Heart left ventricle (tissue), 16 donors: ENCODE measurements at regions of chr16 and their contacts with region 1.

Region 1: GRCh38 chr16:75471723-75472633 is 7.5 kb upstream of the TMEM170A start:
- DNase-seq: peak in 4 of 5 donors; percentile 46 to 56 (median 52)
- ATAC-seq: peak; percentile 87 to 98 (median 94)
- H3K4me3 ChIP-seq: no peak overlapping the region
- H3K27ac ChIP-seq: no peak overlapping the region
- H3K4me1 ChIP-seq: no peaks in the 10 kb centered on the region
- H3K27me3 ChIP-seq: no peaks in the 10 kb centered on the region
- CTCF ChIP-seq: peak; percentile 57 to 84 (median 74)
- POLR2A ChIP-seq: no peak

Region 2: GRCh38 chr16:75506567-75506966 is 34.6 kb after region 1 on chr16:
- intact Hi-C with region 1: no loop called
- DNase-seq: peak in 2 of 5 donors; percentile 58 to 66
- ATAC-seq: peak; percentile 36 to 83 (median 75)
- H3K4me3 ChIP-seq: no peak overlapping the region
- H3K27ac ChIP-seq: peak overlapping the region in 6 of 12 donors; percentile 14 to 67 (median 25)
- H3K4me1 ChIP-seq: peaks cover 0 to 12% (median under 1%) of the 10 kb centered on the region in 12 donors
- H3K27me3 ChIP-seq: no peaks in the 10 kb centered on the region
- CTCF ChIP-seq: no peak
- POLR2A ChIP-seq: no peak

Region 3: GRCh38 chr16:75527825-75528299 is 55.9 kb after region 1 on chr16:
- intact Hi-C with region 1: loop called in 1 of 10 experiments (anchors 5 kb)
- DNase-seq: no peak
- ATAC-seq: no peak
- H3K4me3 ChIP-seq: no peak overlapping the region
- H3K27ac ChIP-seq: no peak overlapping the region
- H3K4me1 ChIP-seq: no peaks in the 10 kb centered on the region
- H3K27me3 ChIP-seq: no peaks in the 10 kb centered on the region
- CTCF ChIP-seq: no peak
- POLR2A ChIP-seq: no peak

Region 4: DNA sequence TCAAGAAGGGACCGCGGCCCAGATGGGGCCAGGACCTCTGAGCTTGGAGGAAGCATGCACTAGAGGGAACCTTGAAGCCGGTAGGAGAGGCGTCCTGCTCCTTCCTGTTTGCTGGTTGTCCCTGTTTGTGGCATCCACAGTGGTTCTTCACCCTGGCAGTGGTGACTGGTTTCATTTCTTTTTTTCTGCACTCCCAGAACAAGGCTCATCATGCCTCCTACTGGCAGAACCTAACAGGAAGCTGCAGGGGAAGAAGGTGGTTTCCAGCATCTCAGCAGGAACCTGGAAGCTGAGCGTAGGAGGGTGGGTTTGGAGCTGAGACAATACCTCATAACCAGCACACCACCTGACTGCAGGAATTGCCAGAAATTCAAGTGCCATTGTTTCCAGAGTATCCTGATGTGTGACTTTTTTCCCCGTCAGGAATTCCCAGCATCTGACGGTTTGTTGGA is 78.3 kb after region 1 on chr16:
- intact Hi-C with region 1: loop called in 4 of 10 experiments (anchors 5 to 10 kb)
- DNase-seq: peak in 4 of 5 donors; percentile 51 to 76 (median 73)
- ATAC-seq: peak; percentile 54 to 89 (median 64)
- H3K4me3 ChIP-seq: peak overlapping the region in 5 of 12 donors; percentile 5 to 32 (median 23)
- H3K27ac ChIP-seq: peak overlapping the region in 10 of 12 donors; percentile 50 to 81 (median 70)
- H3K4me1 ChIP-seq: peaks cover 0 to 35% (median 9%) of the 10 kb centered on the region in 12 donors
- H3K27me3 ChIP-seq: no peaks in the 10 kb centered on the region
- CTCF ChIP-seq: peak; percentile 14 to 68 (median 48)
- POLR2A ChIP-seq: no peak

Region 5: DNA sequence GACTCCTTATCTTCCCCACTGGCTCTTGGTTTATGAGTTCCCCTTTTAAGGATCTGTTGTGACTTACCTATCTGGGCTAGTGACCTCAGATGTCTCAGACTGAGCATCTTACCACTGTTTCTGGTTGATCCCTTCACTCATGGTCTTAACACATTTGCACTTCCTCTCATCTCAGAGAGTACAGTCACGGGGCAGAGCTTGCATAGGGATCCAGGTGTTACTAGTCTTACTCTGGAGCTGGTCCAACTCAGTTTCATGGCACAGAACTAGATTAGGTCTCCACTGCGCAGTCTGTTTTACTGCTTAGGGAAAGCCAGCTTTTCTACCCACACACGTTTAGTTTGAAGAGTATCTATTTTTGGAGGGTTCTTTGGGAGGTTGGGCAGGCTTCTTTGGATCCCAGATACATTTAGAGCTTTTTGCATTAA is 104.4 kb after region 1 on chr16:
- intact Hi-C with region 1: no loop called
- DNase-seq: no peak
- ATAC-seq: peak in 1 of 4 donors; percentile 18
- H3K4me3 ChIP-seq: no peak overlapping the region
- H3K27ac ChIP-seq: no peak overlapping the region
- H3K4me1 ChIP-seq: peaks cover 2 to 51% (median 24%) of the 10 kb centered on the region in 12 donors
- H3K27me3 ChIP-seq: no peaks in the 10 kb centered on the region
- CTCF ChIP-seq: no peak
- POLR2A ChIP-seq: no peak

Region 6: GRCh38 chr16:75593825-75594820 is 122.1 kb after region 1 on chr16:
- intact Hi-C with region 1: loop called in 1 of 10 experiments (anchors 10 kb)
- DNase-seq: no peak
- ATAC-seq: peak in 1 of 4 donors; percentile 23
- H3K4me3 ChIP-seq: no peak overlapping the region
- H3K27ac ChIP-seq: peak overlapping the region in 10 of 12 donors; percentile 13 to 82 (median 50)
- H3K4me1 ChIP-seq: peaks cover 0 to 52% (median 37%) of the 10 kb centered on the region in 12 donors
- H3K27me3 ChIP-seq: no peaks in the 10 kb centered on the region
- CTCF ChIP-seq: no peak
- POLR2A ChIP-seq: no peak

Region 7: DNA sequence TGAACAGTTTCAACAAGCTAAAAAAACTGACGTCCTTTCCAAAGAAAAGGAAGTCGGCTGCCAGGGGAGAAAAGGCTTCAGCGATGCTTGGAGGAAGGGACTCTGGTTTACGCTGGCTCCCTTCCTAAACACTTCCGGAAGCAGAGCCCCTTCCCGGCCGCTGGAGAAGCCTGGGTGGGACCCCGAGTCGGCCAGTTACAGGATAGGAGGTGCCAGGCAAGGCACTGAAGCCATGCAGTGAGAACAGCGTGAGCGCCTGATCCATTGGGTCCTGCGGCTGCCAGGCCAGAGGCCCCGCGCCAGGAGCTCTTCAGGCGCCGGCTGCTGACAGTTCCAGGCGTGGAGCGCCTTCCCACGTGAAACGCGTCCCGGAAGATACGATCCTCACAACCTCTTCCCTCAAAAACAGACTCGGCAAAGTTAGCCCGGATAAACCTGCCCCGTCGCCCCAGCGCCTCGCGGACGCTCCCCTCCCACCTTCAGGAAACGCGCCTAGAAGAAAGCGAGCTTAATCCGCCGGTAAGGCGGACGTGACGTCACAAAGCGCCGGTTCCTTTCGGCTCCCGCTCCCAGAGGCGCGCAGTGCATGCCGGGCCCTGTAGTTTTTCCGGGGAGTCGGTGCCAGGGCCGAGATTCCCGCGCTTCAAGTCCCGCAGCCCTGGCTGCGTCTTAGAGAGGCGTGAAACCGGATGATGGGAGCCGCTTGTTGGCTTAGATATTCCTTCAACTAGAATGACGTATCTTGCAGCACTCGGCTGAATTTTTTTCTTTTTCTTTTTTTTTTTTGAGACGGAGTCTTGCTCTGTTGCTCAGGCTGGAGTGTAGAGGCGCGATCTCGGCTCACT is 151.0 kb after region 1 on chr16 and contains the start of gene ADAT1:
- intact Hi-C with region 1: loop called in 9 of 10 experiments (anchors 1 to 10 kb)
- DNase-seq: peak; percentile 98 to 99 (median 99)
- ATAC-seq: peak; percentile 96 to 97 (median 97)
- H3K4me3 ChIP-seq: peak within 1 kb of the TSS; percentile 57 to 89 (median 72)
- H3K27ac ChIP-seq: peak within 1 kb of the TSS; percentile 74 to 96 (median 92)
- H3K4me1 ChIP-seq: peaks cover 0 to 43% (median 19%) of the 10 kb centered on the region in 12 donors
- H3K27me3 ChIP-seq: no peaks in the 10 kb centered on the region
- CTCF ChIP-seq: no peak
- POLR2A ChIP-seq: peak in 1 of 2 donors; percentile 92
- total RNA-seq, gene ADAT1: 16.8 to 37.5 (median 24.1) TPM

Region 8: DNA sequence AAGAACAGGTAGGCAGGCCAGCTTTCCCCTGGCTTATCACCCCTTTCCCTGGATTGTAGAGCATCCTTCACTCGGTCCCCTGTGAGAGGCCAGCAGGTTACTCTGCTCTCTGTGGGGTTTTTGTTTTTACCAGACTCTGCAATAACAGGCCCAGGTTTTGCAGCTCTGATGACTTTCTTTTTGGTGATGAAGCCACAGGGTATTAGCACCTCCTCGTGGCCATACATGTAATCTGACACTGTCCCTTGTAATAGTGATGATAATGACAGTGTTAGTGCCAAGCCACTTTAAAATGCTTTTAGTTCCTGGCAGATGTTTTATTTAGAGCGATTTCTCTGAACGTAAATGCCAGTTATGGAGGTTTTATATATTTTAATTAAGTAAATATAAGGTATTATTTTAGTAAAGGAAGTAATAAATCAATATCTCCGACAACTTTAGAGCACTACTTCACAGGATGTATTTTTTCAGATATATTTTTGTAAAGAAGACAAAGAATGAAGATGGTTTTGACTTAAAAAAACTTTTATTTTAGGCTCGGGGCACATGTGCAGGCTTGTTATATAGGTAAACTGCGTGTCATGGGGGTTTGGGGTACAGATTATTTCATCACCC is 292.3 kb after region 1 on chr16:
- intact Hi-C with region 1: loop called (anchors 1 to 10 kb)
- DNase-seq: peak in 3 of 5 donors; percentile 40 to 50 (median 45)
- ATAC-seq: peak in 3 of 4 donors; percentile 90 to 95 (median 91)
- H3K4me3 ChIP-seq: no peak overlapping the region
- H3K27ac ChIP-seq: no peak overlapping the region
- H3K4me1 ChIP-seq: no peaks in the 10 kb centered on the region
- H3K27me3 ChIP-seq: no peaks in the 10 kb centered on the region
- CTCF ChIP-seq: peak; percentile 64 to 87 (median 78)
- POLR2A ChIP-seq: no peak